ENCODE measurements at regions of chr20 and their contacts with region 1.

Region 1: GRCh38 chr20:23367770-23368169 is 5.8 kb downstream of the GZF1 start:
- DNase-seq: no peak
- ATAC-seq: no peak
- H3K4me3 ChIP-seq: no peak overlapping the region
- H3K4me3 Mint-ChIP-seq: no peak overlapping the region
- H3K27ac ChIP-seq: no peak overlapping the region
- H3K27ac Mint-ChIP-seq: peak overlapping the region; percentile 79
- H3K4me1 ChIP-seq: peaks cover 18% of the 10 kb centered on the region
- H3K4me1 Mint-ChIP-seq: peaks cover 47% of the 10 kb centered on the region
- H3K27me3 ChIP-seq: no peaks in the 10 kb centered on the region
- H3K27me3 Mint-ChIP-seq: no peaks in the 10 kb centered on the region
- CTCF ChIP-seq: no peak

Region 2: DNA sequence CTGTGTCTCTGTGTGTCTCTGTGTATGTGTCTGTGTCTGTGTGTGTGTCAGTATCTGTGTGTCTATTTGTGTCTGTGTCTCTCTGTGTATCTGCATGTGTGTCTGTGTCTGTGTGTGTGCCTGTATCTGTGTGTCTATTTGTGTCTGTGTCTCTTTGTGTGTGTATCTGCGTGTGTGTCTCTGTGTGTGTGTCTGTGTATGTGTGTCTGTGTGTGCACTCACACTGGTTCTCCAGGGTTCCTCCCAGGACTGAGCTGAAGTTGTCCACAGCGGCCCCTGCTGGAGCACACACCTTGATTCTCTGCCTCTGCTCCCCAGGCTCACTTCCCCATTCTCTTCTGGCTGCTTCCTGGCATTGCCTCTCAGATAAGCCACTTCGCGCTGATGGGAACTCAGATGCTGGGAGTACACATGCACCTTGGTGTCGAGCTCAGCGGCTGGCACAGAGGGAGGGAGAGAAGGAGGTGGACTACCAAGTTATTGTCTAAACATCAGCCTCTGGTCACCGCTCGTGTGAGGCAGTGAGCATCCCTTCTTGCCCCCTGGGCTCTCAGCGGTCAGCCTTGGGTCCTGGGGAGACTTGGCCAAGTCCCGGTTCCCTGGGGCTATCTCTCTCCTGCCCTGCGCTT is 122.1 kb before region 1 on chr20:
- CTCF ChIA-PET with region 1: no interaction called
- POLR2A ChIA-PET with region 1: no interaction called
- intact Hi-C with region 1: no loop called
- DNase-seq: peak in 4 of 14 experiments; percentile 5 to 62 (median 36)
- ATAC-seq: no peak
- H3K4me3 ChIP-seq: no peak overlapping the region
- H3K4me3 Mint-ChIP-seq: no peak overlapping the region
- H3K27ac ChIP-seq: no peak overlapping the region
- H3K27ac Mint-ChIP-seq: no peak overlapping the region
- H3K4me1 ChIP-seq: no peaks in the 10 kb centered on the region
- H3K4me1 Mint-ChIP-seq: no peaks in the 10 kb centered on the region
- H3K27me3 ChIP-seq: peaks cover 0 to 2% of the 10 kb centered on the region in 2 experiments
- H3K27me3 Mint-ChIP-seq: peaks cover 16% of the 10 kb centered on the region
- CTCF ChIP-seq: no peak

Region 3: GRCh38 chr20:23350196-23350903 is 17.4 kb before region 1 on chr20 and contains the start of gene NXT1:
- CTCF ChIA-PET with region 1: interaction called, 9 read pairs
- POLR2A ChIA-PET with region 1: interaction called, 9 read pairs
- intact Hi-C with region 1: loop called (anchors 1 kb)
- DNase-seq: peak; percentile 90 to 98 (median 94)
- ATAC-seq: peak; percentile 81
- H3K4me3 ChIP-seq: peak within 1 kb of the TSS; percentile 77
- H3K4me3 Mint-ChIP-seq: peak within 1 kb of the TSS; percentile 98
- H3K27ac ChIP-seq: peak within 1 kb of the TSS; percentile 99 to 100
- H3K27ac Mint-ChIP-seq: peak within 1 kb of the TSS; percentile 99
- H3K4me1 ChIP-seq: peaks cover 30% of the 10 kb centered on the region
- H3K4me1 Mint-ChIP-seq: peaks cover 30% of the 10 kb centered on the region
- H3K27me3 ChIP-seq: no peaks in the 10 kb centered on the region
- H3K27me3 Mint-ChIP-seq: no peaks in the 10 kb centered on the region
- CTCF ChIP-seq: no peak
- total RNA-seq, gene NXT1: 55.4 to 57.1 TPM